SK-N-SH (cell line): ENCODE measurements at regions of chr17 and their contacts with region 1.

Region 1: GRCh38 chr17:37450112-37450511 is 39.6 kb upstream of the DUSP14 start:
- DNase-seq: no peak
- H3K4me3 ChIP-seq: no peak overlapping the region
- H3K27ac ChIP-seq: no peak overlapping the region
- H3K4me1 ChIP-seq: peaks cover 0 to 27% of the 10 kb centered on the region in 2 experiments; a peak in 1 of 4 replicates
- H3K27me3 ChIP-seq: no peaks in the 10 kb centered on the region
- CTCF ChIP-seq: no peak
- EP300 ChIP-seq: no peak
- RAD21 ChIP-seq: no peak

Region 2: GRCh38 chr17:37438141-37438540 is 12.0 kb before region 1 on chr17:
- CTCF ChIA-PET with region 1: interaction called, 13 read pairs
- POLR2A ChIA-PET with region 1: no interaction called
- DNase-seq: no peak
- H3K4me3 ChIP-seq: no peak overlapping the region
- H3K27ac ChIP-seq: no peak overlapping the region
- H3K4me1 ChIP-seq: no peaks in the 10 kb centered on the region
- H3K27me3 ChIP-seq: no peaks in the 10 kb centered on the region
- CTCF ChIP-seq: peak; percentile 47
- EP300 ChIP-seq: no peak
- RAD21 ChIP-seq: no peak

Region 3: DNA sequence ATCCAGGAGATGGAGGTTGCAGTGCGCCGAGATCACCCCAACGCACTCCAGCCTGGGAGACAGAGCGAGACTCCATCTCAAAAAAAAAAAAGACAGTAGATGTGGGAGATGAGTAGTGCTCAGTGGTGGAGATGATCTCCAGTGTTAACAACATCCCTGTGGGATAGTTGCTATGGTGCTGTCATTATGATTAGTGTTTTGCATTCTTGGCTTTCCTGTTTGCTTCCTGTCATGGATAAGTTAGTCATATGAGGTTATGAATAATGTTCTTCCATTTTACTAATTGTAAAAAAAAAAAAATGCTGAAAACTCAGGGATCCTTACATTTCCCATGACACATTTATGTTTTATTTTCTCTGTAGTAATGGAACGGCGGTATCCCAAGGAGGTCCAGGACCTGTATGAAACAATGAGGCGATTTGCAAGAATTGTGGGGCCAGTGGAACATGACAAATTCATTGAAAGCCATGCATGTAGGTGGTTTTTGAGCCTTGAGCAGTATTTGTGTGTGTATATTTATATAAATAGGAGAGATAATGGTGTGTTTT is 15.0 kb after region 1 on chr17:
- CTCF ChIA-PET with region 1: no interaction called
- POLR2A ChIA-PET with region 1: no interaction called
- DNase-seq: no peak
- H3K4me3 ChIP-seq: no peak overlapping the region
- H3K27ac ChIP-seq: peak overlapping the region in 1 of 2 experiments; percentile 85; a peak in 2 of 4 replicates
- H3K4me1 ChIP-seq: 0 out of 4 replicates have a peak, but pooled peaks cover 0 to 5% of the 10 kb centered on the region in 2 experiments
- H3K27me3 ChIP-seq: no peaks in the 10 kb centered on the region
- CTCF ChIP-seq: no peak
- EP300 ChIP-seq: peak in 1 of 2 experiments; percentile 39; a peak in 1 of 4 replicates
- RAD21 ChIP-seq: no peak

Region 4: DNA sequence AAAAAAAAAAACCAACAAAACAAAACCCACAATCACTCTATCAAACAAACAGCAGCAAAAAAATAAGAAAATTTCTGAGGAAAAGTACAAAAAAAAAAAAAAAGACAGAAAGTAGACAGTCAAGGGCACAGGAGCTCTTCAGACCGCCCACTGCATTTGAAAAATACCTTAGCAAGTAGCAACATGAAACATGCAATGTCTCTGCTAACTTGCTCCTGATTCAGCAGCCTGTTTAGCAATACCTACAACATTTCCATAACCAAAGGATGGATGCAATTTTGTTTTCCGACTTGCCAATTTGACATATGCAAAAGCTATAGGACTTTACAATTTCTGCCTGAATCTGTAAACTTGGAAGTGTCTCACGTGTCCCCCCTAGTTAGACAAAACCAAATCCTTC is 101.7 kb after region 1 on chr17:
- CTCF ChIA-PET with region 1: no interaction called
- POLR2A ChIA-PET with region 1: no interaction called
- DNase-seq: no peak
- H3K4me3 ChIP-seq: no peak overlapping the region
- H3K27ac ChIP-seq: no peak overlapping the region
- H3K4me1 ChIP-seq: no peaks in the 10 kb centered on the region; a peak in 2 of 4 replicates
- H3K27me3 ChIP-seq: no peaks in the 10 kb centered on the region
- CTCF ChIP-seq: no peak
- EP300 ChIP-seq: no peak
- RAD21 ChIP-seq: no peak